Activated CD4-positive, alpha-beta T cell treated with anti-CD3 and anti-CD28 coated beads for 36 hours (primary cell): ENCODE measurements at regions of chr3 and their contacts with region 1.

Region 1: GRCh38 chr3:127598841-127599570 is 795 bp downstream of the MCM2 start:
- DNase-seq: no peak
- ATAC-seq: no peak
- H3K4me3 Mint-ChIP-seq: peak overlapping the region; percentile 80
- H3K27ac Mint-ChIP-seq: peak overlapping the region; percentile 96
- H3K4me1 Mint-ChIP-seq: peaks cover 41% of the 10 kb centered on the region
- H3K27me3 Mint-ChIP-seq: no peaks in the 10 kb centered on the region

Region 2: DNA sequence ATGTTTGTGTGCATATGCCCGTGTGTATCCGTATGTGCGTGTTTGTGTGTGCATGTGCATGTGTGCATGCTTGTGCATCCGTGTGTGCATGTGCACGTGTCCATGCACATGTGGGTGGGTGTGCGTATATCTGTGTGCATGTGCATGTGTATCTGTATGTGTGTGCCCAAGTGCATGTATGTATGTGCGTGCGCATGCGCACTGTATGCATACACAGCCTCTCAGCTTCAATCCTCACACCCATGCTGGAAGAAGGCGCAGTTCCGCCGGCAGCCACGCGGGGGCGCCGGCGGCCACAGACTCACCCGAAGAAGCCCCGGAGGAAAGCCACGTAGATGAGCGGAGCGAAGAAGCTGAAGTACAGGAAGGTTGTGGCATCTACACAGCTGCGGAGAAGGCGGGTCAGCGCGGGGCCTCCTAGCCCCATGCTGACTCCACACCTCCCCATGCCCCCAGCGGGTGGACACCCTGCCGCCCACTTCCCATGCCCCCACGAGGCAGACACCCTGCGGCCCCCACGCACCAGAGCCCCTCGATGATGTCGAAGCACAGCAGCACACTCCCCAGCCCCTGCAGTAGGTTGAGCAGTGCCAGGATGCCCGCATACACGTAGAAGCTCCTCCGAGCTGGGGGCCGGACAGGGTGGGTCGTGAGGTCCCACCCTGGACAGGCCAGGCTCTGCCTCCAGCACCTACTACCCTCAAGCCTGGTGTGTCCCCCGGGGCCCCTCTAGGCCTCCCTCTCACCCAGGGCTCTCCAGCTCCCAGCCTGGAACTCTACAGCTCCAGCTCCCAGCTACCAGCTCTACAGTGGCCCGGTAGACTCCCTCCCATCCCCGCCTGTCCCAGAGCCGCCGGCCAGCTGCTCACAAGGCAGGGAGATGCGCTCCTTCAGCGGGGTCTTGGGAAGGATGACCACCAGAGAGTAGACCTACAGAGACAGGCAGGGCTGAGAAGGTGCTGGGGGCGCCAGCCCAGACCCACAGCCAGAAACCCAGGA is 23.8 kb before region 1 on chr3:
- CTCF ChIA-PET with region 1: interaction called, 14 read pairs
- POLR2A ChIA-PET with region 1: interaction called, 7 read pairs
- intact Hi-C with region 1: loop called in 1 of 2 experiments (anchors 1 kb)
- DNase-seq: peak; percentile 90
- ATAC-seq: peak; percentile 97
- H3K4me3 Mint-ChIP-seq: no peak overlapping the region
- H3K27ac Mint-ChIP-seq: peak overlapping the region; percentile 34
- H3K4me1 Mint-ChIP-seq: peaks cover 8% of the 10 kb centered on the region
- H3K27me3 Mint-ChIP-seq: no peaks in the 10 kb centered on the region

Region 3: GRCh38 chr3:127628788-127629466 is 29.9 kb after region 1 on chr3 and contains the start of gene PODXL2:
- CTCF ChIA-PET with region 1: interaction called, 4 read pairs
- POLR2A ChIA-PET with region 1: interaction called, 10 read pairs
- intact Hi-C with region 1: loop called (anchors 1 to 5 kb)
- DNase-seq: peak; percentile 53
- ATAC-seq: peak; percentile 61
- H3K4me3 Mint-ChIP-seq: peak within 1 kb of the TSS; percentile 66
- H3K27ac Mint-ChIP-seq: peak within 1 kb of the TSS; percentile 58
- H3K4me1 Mint-ChIP-seq: peaks cover 28% of the 10 kb centered on the region
- H3K27me3 Mint-ChIP-seq: peaks cover 24% of the 10 kb centered on the region
- total RNA-seq, gene PODXL2: 1.9 TPM

Region 4: GRCh38 chr3:128153156-128154041 is 554.4 kb after region 1 on chr3 and contains the start of gene EEFSEC:
- CTCF ChIA-PET with region 1: no interaction called
- POLR2A ChIA-PET with region 1: no interaction called
- intact Hi-C with region 1: loop called in 1 of 2 experiments (anchors 1 kb)
- DNase-seq: peak; percentile 91
- ATAC-seq: peak; percentile 95
- H3K4me3 Mint-ChIP-seq: peak within 1 kb of the TSS; percentile 80
- H3K27ac Mint-ChIP-seq: peak within 1 kb of the TSS; percentile 85
- H3K4me1 Mint-ChIP-seq: peaks cover 25% of the 10 kb centered on the region
- H3K27me3 Mint-ChIP-seq: no peaks in the 10 kb centered on the region
- total RNA-seq, gene EEFSEC: 19.6 to 20.7 TPM